A673 (cell line): ENCODE measurements at regions of chr10 and their contacts with region 1.

Region 1: GRCh38 chr10:67306588-67307205 is 380.9 kb downstream of the LRRTM3 start:
- DNase-seq: peak; percentile 47
- H3K4me3 ChIP-seq: no peak overlapping the region
- H3K27ac ChIP-seq: no peak overlapping the region
- H3K4me1 ChIP-seq: no peaks in the 10 kb centered on the region
- H3K27me3 ChIP-seq: no peaks in the 10 kb centered on the region
- CTCF ChIP-seq: peak; percentile 65

Region 2: GRCh38 chr10:67520924-67521520 is 214.3 kb after region 1 on chr10:
- CTCF ChIA-PET with region 1: no interaction called
- POLR2A ChIA-PET with region 1: no interaction called
- intact Hi-C with region 1: loop called (anchors 5 kb)
- DNase-seq: peak; percentile 59
- H3K4me3 ChIP-seq: no peak overlapping the region
- H3K27ac ChIP-seq: no peak overlapping the region
- H3K4me1 ChIP-seq: no peaks in the 10 kb centered on the region
- H3K27me3 ChIP-seq: no peaks in the 10 kb centered on the region
- CTCF ChIP-seq: peak; percentile 88